ENCODE measurements at regions of chr16 and their contacts with region 1.

Region 1: GRCh38 chr16:74606521-74607310 is at the start of gene GLG1:
- DNase-seq: peak; percentile 53 to 96
- H3K4me3 ChIP-seq: peak within 1 kb of the TSS; percentile 88 to 99
- H3K27ac ChIP-seq: peak within 1 kb of the TSS; percentile 96 to 97
- H3K4me1 ChIP-seq: peaks cover 0 to 11% of the 10 kb centered on the region in 2 donors
- H3K27me3 ChIP-seq: no peaks in the 10 kb centered on the region
- CTCF ChIP-seq: no peak
- total RNA-seq, gene GLG1: 77.0 TPM

Region 2: DNA sequence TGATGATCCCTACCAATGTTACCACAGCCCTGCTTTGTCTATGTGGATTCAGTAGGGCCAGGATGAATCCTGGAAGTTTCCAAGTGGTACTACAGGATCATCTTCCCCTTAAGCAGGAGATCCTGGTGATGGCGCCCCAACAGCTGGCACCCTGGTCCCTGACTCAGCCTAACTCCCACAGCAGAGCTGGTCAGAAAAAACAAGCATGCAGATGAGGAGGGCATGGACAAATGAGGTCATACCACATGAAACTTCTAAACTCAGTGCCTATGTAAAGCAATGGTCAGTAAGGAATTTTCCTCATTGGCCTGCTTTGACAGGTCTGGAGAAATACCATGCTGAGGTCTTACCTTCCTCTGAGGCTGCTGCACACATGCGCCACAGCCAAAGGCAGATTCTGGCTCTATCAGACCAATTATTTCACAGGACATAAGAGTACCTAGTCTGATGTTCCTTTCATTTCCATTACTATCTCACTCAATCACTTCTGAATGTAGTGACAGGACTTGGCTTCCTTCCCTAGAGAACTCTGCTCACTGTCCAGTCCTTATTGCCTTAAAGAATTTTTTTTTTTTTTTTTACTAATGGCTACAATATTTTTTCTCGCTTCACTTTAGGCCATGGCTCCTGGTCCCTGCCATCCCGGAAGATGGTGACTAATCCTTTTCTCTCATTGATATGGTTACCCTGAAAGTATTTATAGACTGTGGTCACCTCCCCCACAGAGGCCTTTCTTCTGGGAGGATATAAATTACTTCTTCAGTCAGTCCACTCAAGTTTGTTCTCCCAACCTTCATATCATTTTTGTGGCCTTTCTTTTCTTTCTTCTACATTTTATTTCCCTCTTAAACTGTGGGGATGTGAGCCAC is 835.3 kb before region 1 on chr16:
- intact Hi-C with region 1: loop called (anchors 10 kb)
- DNase-seq: no peak
- H3K4me3 ChIP-seq: no peak overlapping the region
- H3K27ac ChIP-seq: peak overlapping the region; percentile 64 to 82
- H3K4me1 ChIP-seq: peaks cover 15 to 41% of the 10 kb centered on the region in 2 donors
- H3K27me3 ChIP-seq: no peaks in the 10 kb centered on the region
- CTCF ChIP-seq: no peak

Region 3: DNA sequence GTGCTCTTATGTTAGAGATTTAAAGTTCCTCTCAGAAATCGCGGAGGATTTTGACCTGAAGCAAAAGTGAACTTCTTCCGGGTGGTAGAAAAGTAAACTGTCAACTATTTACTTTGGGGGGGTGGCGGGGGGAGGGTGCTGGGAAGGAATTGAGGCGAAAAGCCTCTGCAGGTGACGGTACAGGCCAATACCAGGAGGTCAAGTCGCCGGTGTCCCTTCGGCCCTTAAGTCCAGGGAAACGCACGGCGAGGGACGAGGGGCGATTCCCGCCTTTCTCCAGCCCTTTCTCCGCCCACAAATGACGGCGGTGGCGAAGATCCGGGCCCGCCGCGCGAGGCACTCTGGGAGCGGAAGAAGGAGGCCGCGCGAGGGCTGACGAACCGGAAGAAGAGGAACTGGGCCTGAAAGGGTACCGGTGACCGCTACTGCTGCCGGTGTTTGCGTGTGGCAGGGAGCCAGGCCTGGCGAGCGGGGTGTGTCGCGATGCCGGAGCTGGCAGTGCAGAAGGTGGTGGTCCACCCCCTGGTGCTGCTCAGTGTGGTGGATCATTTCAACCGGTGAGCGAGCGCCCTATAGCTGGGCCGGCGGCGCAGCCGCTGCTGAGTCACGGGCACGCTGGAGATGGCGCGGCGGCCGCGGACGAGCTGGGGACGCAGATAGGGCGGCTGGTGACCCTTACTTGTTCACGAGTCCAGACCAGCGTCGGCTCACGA is 310.1 kb before region 1 on chr16 and contains the start of gene PSMD7:
- intact Hi-C with region 1: loop called (anchors 5 kb)
- DNase-seq: peak; percentile 62 to 96
- H3K4me3 ChIP-seq: peak within 1 kb of the TSS; percentile 75 to 98
- H3K27ac ChIP-seq: peak within 1 kb of the TSS; percentile 89 to 95
- H3K4me1 ChIP-seq: peaks cover 3 to 18% of the 10 kb centered on the region in 2 donors
- H3K27me3 ChIP-seq: no peaks in the 10 kb centered on the region
- CTCF ChIP-seq: no peak
- total RNA-seq, gene PSMD7: 60.3 TPM

Region 4: GRCh38 chr16:74501484-74502479 is 104.9 kb before region 1 on chr16:
- intact Hi-C with region 1: loop called (anchors 5 kb)
- DNase-seq: no peak
- H3K4me3 ChIP-seq: no peak overlapping the region
- H3K27ac ChIP-seq: peak overlapping the region; percentile 56 to 61
- H3K4me1 ChIP-seq: peaks cover 0 to 13% of the 10 kb centered on the region in 2 donors
- H3K27me3 ChIP-seq: no peaks in the 10 kb centered on the region
- CTCF ChIP-seq: no peak

Region 5: DNA sequence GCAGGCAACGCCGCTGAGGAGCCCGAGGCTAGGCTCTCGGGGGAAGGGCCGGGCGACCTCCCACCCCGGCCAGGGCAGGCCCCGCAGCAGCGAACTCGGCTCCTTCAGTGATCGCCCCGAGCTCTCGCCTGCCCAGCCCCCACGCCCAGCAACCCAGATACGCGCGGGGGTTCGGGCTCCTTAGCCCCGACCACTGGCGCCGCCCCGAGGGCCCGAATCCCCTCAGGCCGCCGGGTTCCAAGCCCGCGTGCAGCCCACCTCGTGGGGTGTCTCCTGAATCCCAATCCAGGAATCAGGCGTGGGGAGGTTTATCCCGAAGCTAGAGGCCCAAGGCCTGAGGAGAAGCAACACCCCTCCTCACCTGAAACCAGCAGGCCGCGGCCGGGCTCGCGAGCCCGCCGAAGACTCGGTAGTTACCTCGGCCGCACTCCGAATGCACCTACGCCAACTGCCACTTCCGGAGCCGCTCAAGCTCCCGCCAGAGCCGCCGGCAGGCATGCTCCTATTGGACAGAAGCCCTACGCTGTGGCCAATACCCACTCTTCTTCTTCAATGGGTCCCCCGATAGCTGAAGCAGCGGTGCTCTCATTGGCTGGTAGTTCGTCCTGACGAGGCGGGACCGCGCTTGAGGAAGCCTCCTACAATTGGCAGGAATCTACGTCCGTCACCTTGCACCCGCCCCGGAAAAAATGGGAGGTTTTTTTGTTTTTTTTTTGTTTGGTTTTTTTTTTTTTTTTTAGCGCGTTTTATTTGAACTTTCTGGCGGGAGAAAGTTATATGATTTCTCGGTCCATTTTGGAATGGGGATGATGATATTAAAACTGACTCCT is 59.9 kb after region 1 on chr16 and contains the start of gene RFWD3:
- intact Hi-C with region 1: loop called (anchors 5 kb)
- DNase-seq: peak; percentile 91 to 99
- H3K4me3 ChIP-seq: peak within 1 kb of the TSS; percentile 78 to 94
- H3K27ac ChIP-seq: peak within 1 kb of the TSS; percentile 13 to 77
- H3K4me1 ChIP-seq: peaks cover 0 to 6% of the 10 kb centered on the region in 2 donors
- H3K27me3 ChIP-seq: no peaks in the 10 kb centered on the region
- CTCF ChIP-seq: no peak
- total RNA-seq, gene RFWD3: 54.6 TPM

Measured in ascending aorta (tissue), 2 donors.